ENCODE measurements at regions of chr2 and their contacts with region 1.

Region 1: DNA sequence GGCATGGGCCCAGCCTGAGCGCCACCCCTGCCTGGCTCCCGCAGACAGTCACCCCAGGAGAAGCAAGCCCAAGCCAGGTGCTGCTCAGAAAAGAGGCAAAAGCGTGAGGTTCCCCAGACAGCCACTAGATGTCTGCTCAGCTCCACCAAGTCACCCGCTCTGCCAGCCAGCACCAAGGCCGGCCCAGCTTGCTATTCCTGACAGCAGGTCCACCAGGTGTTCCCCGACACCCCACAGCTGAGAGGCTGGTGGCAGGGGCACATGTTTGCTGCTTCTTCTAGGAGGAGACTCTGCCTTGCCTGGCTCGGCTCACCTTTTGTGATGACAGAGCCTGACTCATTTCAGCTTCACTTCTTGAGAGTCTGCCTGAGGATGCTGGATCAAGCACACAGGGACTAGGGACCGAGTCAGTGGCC is 206.7 kb downstream of the MGAT5 start:
- DNase-seq: peak; percentile 53 to 97 (median 78)

Region 2: DNA sequence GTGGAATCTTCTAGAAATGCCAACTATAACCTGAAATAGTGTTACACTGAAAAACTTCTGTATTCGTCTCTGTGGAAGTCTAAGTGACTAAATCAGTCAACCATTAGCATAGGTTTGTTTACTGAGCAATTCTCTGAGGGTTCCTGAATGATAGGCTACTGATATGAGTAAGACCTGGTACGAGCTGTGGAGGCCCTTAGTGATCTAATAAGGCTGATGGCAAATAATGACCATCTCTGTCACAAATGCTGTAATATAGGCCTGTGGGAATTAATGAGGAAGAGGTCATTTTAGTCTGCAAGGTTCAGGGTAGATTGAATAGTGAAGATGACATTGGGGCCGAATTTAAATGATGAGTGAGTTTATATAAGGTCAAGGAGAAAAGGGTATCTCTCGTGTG is 124.2 kb before region 1 on chr2:
- intact Hi-C with region 1: no loop called
- DNase-seq: no peak

Region 3: GRCh38 chr2:134897932-134898331 is 437.3 kb after region 1 on chr2:
- intact Hi-C with region 1: loop called (anchors 2 kb)
- DNase-seq: no peak

Measured in posterior cingulate gyrus (tissue), 11 donors.